ENCODE measurements at regions of chr19 and their contacts with region 1.

Region 1: DNA sequence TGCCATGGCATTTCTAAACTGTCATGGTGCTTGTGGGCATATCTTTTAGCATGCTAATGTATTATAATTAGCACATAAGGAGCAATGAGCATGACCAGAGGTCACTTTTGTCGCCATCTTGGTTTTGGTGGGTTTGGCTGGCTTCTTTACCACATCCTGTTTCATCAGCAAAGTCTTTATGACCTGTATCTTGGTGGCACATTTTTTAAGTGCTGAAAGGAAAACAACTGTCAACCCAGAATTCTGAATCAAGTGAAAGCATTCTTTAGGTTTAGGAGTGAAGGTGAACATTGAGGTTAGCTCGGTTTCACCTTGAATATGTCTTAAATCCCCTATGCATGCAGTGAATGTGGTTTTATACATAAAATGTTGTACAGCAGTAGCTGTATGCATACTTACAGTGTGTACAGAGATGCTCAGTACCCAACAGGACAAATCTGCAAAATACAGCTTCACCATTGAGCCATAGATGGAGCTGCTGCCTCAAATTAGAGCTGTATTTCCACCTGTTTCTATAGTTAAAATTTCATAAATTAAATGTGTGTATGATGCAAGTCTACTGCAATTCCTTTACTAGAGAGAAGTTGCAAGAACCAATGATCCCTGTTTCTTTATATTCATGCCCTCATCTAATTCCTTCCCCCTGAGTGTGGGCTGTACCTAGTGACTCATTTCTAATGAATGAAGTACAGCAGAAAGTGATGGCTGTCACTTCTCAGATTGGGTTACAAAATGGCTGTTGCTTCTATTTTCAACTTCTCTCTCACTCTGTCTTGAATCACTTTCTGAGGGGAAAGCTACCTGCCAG is 25.2 kb upstream of the IGSF23 start:
- DNase-seq: peak; percentile 89
- H3K4me3 ChIP-seq: no peak overlapping the region
- CTCF ChIP-seq: peak; percentile 38

Region 2: GRCh38 chr19:44576843-44577565 is 11.2 kb before region 1 on chr19:
- CTCF ChIA-PET with region 1: interaction called, 49 read pairs
- POLR2A ChIA-PET with region 1: no interaction called
- DNase-seq: no peak
- H3K4me3 ChIP-seq: no peak overlapping the region
- CTCF ChIP-seq: peak; percentile 68

Region 3: GRCh38 chr19:44603201-44603950 is 15.2 kb after region 1 on chr19:
- CTCF ChIA-PET with region 1: interaction called, 25 read pairs
- POLR2A ChIA-PET with region 1: interaction called, 12 read pairs
- DNase-seq: peak; percentile 90
- H3K4me3 ChIP-seq: no peak overlapping the region
- CTCF ChIP-seq: no peak

Measured in AG04449 (cell line).